ENCODE measurements at regions of chr11 and their contacts with region 1.

Region 1: DNA sequence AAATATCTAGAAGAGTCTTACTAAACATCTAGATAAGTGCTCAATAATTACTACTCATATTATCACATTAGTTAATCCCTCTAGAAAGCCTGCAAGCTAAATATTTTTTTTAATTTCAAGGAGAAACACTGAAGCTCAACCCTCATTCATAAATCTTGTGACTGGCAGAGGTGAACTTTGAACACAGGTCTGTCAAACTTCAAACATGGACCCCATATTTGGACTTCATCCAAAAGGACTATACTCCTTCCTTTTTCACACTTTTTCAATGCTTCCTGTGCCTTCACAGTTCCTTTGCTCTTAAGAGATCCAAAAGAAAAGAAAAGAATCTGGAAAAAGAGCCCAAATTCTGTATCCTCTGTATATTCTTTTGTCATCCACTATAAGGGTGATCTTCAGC is 28.3 kb upstream of the OR9G4 start:
- DNase-seq: no peak
- ATAC-seq: no peak
- H3K4me3 ChIP-seq: no peak overlapping the region
- H3K27ac ChIP-seq: no peak overlapping the region
- H3K4me1 ChIP-seq: no peaks in the 10 kb centered on the region
- H3K27me3 ChIP-seq: peaks cover 0 to 5% (median 0%) of the 10 kb centered on the region in 7 donors
- CTCF ChIP-seq: no peak

Region 2: GRCh38 chr11:55936300-55936699 is 840.5 kb before region 1 on chr11 and contains the start of gene OR5I1:
- intact Hi-C with region 1: loop called in 8 of 10 experiments (anchors 5 to 10 kb)
- DNase-seq: no peak
- ATAC-seq: no peak
- H3K4me3 ChIP-seq: no peak within 1 kb of the TSS
- H3K27ac ChIP-seq: no peak within 1 kb of the TSS
- H3K4me1 ChIP-seq: no peaks in the 10 kb centered on the region
- H3K27me3 ChIP-seq: no peaks in the 10 kb centered on the region
- CTCF ChIP-seq: no peak
- total RNA-seq, gene OR5I1: not detected

Region 3: GRCh38 chr11:55994525-55994924 is 782.3 kb before region 1 on chr11 and contains the start of gene OR5F1:
- intact Hi-C with region 1: no loop called
- DNase-seq: no peak
- ATAC-seq: no peak
- H3K4me3 ChIP-seq: no peak within 1 kb of the TSS
- H3K27ac ChIP-seq: no peak within 1 kb of the TSS
- H3K4me1 ChIP-seq: no peaks in the 10 kb centered on the region
- H3K27me3 ChIP-seq: no peaks in the 10 kb centered on the region
- CTCF ChIP-seq: no peak
- total RNA-seq, gene OR5F1: not detected

Region 4: DNA sequence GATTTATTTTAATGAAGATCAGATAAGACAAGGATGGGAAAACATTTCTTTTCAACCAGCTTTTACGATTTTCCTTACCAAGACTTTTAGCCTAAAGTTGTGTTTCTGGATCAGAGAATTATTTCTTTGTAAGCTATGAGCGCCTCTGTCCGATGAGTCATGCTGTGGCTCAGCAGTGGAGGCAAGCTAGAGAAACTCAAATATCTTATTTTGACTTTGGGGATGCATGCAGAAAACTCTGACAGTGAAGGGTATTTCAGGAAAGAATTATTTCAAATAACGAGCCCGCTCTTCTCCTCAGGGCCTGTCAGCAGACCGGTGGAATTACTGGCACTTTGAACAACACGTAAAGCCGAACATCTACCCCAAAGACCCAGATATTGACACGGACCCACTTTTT is 134.0 kb after region 1 on chr11:
- intact Hi-C with region 1: no loop called
- DNase-seq: no peak
- ATAC-seq: no peak
- H3K4me3 ChIP-seq: no peak overlapping the region
- H3K27ac ChIP-seq: no peak overlapping the region
- H3K4me1 ChIP-seq: no peaks in the 10 kb centered on the region
- H3K27me3 ChIP-seq: no peaks in the 10 kb centered on the region
- CTCF ChIP-seq: no peak